ENCODE measurements at regions of chr16 and their contacts with region 1.

Region 1: DNA sequence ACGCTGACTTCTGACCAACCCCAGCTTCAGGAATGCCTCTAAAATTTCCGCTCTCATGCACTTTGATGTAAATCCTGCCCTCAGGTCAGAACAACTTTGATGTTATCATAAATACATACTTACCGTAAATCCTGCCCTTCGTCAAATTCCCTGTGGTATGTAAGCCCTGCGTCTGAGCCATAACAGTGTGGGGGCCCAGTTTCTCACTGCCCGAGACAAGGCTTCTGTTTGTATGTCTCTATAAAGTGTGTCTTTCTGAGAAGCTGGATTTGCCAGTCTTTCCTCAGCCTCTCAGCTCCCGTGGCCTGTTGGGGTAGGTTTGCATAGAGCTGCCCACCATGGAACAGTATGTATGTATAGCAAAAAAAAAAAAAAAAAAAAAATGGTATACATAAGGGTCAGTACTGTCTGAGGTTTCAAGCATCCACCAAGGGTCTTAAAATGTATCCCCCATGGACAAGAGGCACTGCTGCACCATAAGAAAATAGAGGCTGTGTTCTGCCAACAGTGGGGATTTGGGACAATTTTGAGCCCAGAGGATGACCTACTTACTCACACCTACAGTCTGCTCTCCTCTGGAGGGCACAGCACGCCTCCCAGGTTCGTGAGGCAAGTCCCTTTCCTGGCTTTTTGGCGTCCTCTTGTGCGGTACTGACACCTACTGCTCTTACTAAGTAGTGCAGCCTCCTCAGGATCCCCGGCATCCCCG is 17.5 kb downstream of the PRMT7 start:
- DNase-seq: peak; percentile 74
- H3K4me3 ChIP-seq: no peak overlapping the region
- H3K27ac ChIP-seq: no peak overlapping the region
- H3K4me1 ChIP-seq: peaks cover 4% of the 10 kb centered on the region
- H3K27me3 ChIP-seq: no peaks in the 10 kb centered on the region
- CTCF ChIP-seq: peak; percentile 94 to 98

Region 2: DNA sequence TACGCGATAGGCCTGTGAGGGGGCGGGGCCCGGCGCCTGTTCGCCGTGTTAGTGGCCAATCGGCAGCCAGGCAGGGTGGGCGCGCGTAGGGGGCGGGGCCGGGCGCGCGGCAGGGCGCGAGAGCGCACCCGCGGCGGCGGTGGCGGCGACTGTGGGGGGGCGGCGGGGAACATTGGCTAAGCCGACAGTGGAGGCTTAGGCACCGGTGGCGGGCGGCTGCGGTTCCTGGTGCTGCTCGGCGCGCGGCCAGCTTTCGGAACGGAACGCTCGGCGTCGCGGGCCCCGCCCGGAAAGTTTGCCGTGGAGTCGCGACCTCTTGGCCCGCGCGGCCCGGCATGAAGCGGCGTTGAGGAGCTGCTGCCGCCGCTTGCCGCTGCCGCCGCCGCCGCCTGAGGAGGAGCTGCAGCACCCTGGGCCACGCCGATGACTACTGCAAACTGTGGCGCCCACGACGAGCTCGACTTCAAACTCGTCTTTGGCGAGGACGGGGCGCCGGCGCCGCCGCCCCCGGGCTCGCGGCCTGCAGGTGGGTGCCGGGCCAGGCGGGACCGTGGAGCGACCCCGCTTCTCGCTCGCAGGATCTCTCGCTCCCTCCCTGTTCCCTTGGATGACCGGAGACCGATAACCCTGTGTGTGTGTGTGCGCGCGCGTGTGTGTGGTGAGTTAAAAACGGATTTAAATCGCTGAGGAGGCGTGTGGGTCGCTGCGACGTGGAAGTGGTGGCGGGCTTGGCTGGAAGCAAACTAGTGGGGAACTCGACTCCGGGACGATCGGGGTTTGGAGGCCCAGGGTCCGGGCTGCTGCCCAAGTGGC is 242.8 kb before region 1 on chr16 and contains the start of gene NFATC3:
- CTCF ChIA-PET with region 1: no interaction called
- dilution Hi-C with region 1: no loop called
- in situ Hi-C with region 1: loop called in 1 of 2 experiments (anchors 25 kb)
- intact Hi-C with region 1: no loop called
- DNase-seq: peak; percentile 93
- H3K4me3 ChIP-seq: peak within 1 kb of the TSS; percentile 73 to 84 (median 83)
- H3K27ac ChIP-seq: peak within 1 kb of the TSS; percentile 52
- H3K4me1 ChIP-seq: peaks cover 29% of the 10 kb centered on the region
- H3K27me3 ChIP-seq: no peaks in the 10 kb centered on the region
- CTCF ChIP-seq: no peak
- total RNA-seq, gene NFATC3: 19.2 to 27.3 TPM

Region 3: DNA sequence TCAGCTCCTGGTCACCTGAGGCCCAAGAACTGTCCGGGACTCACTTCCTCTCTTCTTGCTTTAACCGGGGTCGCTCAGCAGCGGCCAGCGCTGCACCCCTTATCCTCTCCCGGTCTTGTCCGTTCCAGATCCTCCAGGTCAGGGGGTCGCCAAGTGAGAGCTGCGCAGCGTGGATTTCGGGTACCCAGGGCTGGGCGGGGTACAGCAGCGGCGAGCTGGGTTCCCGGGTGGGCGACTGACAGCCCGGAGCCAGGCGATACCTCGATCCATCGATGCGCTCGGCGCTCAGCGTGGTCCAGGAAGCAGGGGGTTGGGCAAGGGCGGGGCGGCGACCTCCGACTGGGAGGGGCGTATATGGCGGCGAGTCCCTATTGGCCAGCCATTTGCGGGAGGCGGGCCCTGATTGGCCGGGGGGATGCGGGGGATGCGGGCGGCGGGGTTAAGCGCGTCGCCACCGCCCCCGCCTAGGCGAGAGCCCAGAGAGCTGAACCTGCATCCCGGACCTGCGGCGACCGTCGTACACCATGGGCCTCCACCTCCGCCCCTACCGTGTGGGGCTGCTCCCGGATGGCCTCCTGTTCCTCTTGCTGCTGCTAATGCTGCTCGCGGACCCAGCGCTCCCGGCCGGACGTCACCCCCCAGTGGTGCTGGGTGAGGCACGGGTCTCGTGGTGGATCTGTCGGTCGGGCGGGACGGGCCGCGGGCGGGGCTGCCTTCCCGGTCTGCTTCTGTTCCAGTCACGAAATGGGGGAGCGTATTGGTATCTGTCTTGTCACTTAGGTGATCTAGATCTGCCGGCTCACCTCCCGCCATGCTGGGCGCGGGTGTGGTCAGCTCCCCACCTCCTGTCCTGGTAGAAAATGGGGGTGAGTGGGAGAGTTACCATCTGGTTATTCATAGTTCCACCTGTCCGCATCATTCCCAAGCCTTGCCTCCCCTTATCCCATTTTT is 83.1 kb before region 1 on chr16 and contains the start of gene PLA2G15:
- CTCF ChIA-PET with region 1: no interaction called
- dilution Hi-C with region 1: loop called (anchors 5 kb)
- in situ Hi-C with region 1: no loop called
- intact Hi-C with region 1: no loop called
- DNase-seq: peak; percentile 93
- H3K4me3 ChIP-seq: peak within 1 kb of the TSS; percentile 53 to 98 (median 95)
- H3K27ac ChIP-seq: no peak within 1 kb of the TSS
- H3K4me1 ChIP-seq: peaks cover 20% of the 10 kb centered on the region
- H3K27me3 ChIP-seq: no peaks in the 10 kb centered on the region
- CTCF ChIP-seq: peak in 1 of 2 donors; percentile 7
- total RNA-seq, gene PLA2G15: 12.4 to 19.8 TPM

Region 4: GRCh38 chr16:68264128-68265077 is 63.9 kb before region 1 on chr16 and contains the start of gene SLC7A6:
- CTCF ChIA-PET with region 1: interaction called, 4 read pairs
- dilution Hi-C with region 1: no loop called
- in situ Hi-C with region 1: loop called (anchors 5 kb)
- intact Hi-C with region 1: loop called (anchors 1 kb)
- DNase-seq: peak; percentile 62
- H3K4me3 ChIP-seq: peak within 1 kb of the TSS; percentile 59 to 75 (median 68)
- H3K27ac ChIP-seq: peak within 1 kb of the TSS; percentile 67
- H3K4me1 ChIP-seq: peaks cover 11% of the 10 kb centered on the region
- H3K27me3 ChIP-seq: no peaks in the 10 kb centered on the region
- CTCF ChIP-seq: peak; percentile 51 to 71
- total RNA-seq, gene SLC7A6: 27.0 to 37.1 TPM

Region 5: GRCh38 chr16:68382296-68382718 is 54.0 kb after region 1 on chr16:
- CTCF ChIA-PET with region 1: no interaction called
- dilution Hi-C with region 1: loop called (anchors 5 kb)
- in situ Hi-C with region 1: no loop called
- intact Hi-C with region 1: no loop called
- DNase-seq: no peak
- H3K4me3 ChIP-seq: no peak overlapping the region
- H3K27ac ChIP-seq: no peak overlapping the region
- H3K4me1 ChIP-seq: no peaks in the 10 kb centered on the region
- H3K27me3 ChIP-seq: no peaks in the 10 kb centered on the region
- CTCF ChIP-seq: peak in 1 of 2 donors; percentile 30

Region 6: GRCh38 chr16:68512183-68512582 is 183.9 kb after region 1 on chr16:
- CTCF ChIA-PET with region 1: no interaction called
- dilution Hi-C with region 1: no loop called
- in situ Hi-C with region 1: no loop called
- intact Hi-C with region 1: loop called (anchors 1 kb)
- DNase-seq: no peak
- H3K4me3 ChIP-seq: no peak overlapping the region
- H3K27ac ChIP-seq: no peak overlapping the region
- H3K4me1 ChIP-seq: peaks cover 4% of the 10 kb centered on the region
- H3K27me3 ChIP-seq: peaks cover 3% of the 10 kb centered on the region
- CTCF ChIP-seq: no peak

Region 7: DNA sequence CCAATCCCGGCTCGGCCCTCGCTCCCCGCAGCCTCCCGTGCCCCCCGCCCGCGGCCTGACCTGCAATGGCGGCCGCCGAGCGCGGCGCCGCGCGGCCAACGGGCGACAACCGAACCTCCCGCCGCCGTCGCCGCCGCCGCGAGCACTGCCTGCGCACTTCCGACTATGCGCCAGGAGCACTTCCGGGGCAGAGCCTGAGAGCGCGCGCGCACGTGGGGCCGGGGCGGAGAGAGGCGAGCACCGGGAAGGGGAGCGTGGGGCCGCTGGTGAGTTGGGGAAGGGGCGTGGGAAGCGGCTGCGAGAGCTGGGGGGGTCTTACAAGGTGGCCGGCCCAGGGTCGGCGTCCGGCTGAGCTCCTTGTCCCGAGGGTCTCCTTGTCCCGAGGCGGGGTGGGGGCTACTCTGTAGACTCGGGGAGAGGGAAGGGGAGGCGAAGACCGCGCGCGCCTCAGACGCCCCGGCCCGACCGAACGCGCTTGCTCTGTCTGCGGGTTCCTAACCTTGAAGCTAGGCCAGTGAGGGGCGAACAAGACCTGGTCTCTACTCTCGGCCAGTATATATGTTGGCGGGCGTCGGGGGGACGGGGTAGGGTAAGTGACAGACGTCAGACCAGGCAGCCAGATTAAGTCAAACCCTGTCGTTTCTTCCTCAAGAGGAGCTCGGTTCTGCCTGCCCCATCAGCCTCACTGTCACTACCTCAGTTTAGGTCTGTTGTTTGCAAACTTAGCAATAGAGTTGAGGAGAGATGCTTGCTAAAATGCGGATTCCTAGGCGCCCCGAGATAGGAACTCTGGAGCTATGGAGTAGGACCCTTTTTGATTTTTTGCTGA is 804.3 kb after region 1 on chr16 and contains the starts of genes CHTF8 and UTP4:
- CTCF ChIA-PET with region 1: no interaction called
- dilution Hi-C with region 1: no loop called
- in situ Hi-C with region 1: no loop called
- intact Hi-C with region 1: no loop called
- DNase-seq: peak; percentile 75
- H3K4me3 ChIP-seq: peak within 1 kb of the TSS; percentile 95 to 99 (median 97)
- H3K27ac ChIP-seq: peak within 1 kb of the TSS; percentile 78
- H3K4me1 ChIP-seq: peaks cover 17% of the 10 kb centered on the region
- H3K27me3 ChIP-seq: no peaks in the 10 kb centered on the region
- CTCF ChIP-seq: no peak
- total RNA-seq, gene CHTF8: 48.2 to 132 TPM
- total RNA-seq, gene UTP4: 27.5 to 94.7 TPM

Measured in mammary epithelial cell (primary cell).